ENCODE measurements at regions of chr14 and their contacts with region 1.

Region 1: GRCh38 chr14:68137704-68138619 is 318.4 kb downstream of the RAD51B start:
- DNase-seq: peak; percentile 79
- H3K4me3 Mint-ChIP-seq: no peak overlapping the region
- H3K27ac Mint-ChIP-seq: peak overlapping the region; percentile 89
- H3K4me1 Mint-ChIP-seq: peaks cover 38% of the 10 kb centered on the region
- H3K27me3 Mint-ChIP-seq: no peaks in the 10 kb centered on the region
- CTCF ChIP-seq: no peak

Region 2: DNA sequence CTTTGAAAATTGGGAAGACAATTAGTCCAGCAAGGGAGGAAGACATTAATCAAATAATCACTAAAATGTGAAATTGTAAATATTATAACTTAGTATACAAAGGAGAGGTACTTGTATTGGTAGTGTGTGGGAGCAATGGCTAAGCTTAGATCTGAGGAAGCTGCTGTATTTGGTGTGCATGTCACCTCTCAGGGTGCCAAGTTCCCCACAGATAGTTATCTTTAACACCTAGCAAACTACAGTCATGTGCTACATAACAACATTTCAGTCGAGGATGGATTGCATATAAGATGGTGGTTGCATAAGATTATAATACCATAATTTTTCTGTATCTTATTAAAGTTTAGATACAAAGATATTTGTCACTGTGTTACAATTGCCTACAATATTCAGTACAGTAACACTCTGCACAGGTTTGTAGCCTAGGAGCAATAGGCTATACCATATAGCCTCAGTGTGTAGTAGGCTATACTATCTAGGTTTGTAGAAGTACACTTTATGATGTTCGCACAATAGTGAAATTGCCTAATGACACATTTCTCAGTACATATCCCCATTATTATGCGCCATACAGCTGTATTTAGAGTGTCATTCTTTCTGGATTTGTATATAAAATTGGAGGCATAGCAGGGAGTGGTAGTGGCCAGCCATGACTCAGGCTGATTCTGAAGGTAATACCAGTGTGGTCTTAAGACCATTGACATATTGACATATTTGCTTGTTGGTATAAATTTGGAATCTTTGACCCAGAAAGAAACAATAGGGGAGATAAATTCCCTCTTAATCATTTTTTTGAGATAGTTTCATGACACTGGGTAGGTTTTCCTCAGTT is 262.6 kb before region 1 on chr14:
- CTCF ChIA-PET with region 1: no interaction called
- intact Hi-C with region 1: no loop called
- DNase-seq: no peak
- H3K4me3 Mint-ChIP-seq: no peak overlapping the region
- H3K27ac Mint-ChIP-seq: no peak overlapping the region
- H3K4me1 Mint-ChIP-seq: no peaks in the 10 kb centered on the region
- H3K27me3 Mint-ChIP-seq: no peaks in the 10 kb centered on the region
- CTCF ChIP-seq: no peak

Region 3: DNA sequence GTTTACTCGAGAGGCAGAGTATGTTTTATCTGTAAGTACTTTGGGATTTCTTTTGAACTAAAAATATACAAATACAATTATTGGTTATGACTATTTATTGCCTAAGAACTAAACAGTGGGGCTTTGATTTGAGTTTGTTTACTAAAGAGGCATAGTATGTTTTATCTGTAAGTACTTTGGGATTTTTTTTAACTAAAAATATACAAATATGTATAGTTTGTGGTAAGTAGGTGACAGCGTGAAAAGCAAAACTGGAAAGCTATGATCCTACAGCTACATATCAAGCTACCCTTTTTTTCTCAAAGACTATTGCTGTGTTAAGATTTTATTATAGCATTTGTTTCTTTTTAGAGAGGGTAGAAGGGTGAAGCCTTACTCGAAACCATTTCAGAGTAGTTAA is 147.4 kb before region 1 on chr14:
- CTCF ChIA-PET with region 1: no interaction called
- intact Hi-C with region 1: no loop called
- DNase-seq: no peak
- H3K4me3 Mint-ChIP-seq: no peak overlapping the region
- H3K27ac Mint-ChIP-seq: no peak overlapping the region
- H3K4me1 Mint-ChIP-seq: no peaks in the 10 kb centered on the region
- H3K27me3 Mint-ChIP-seq: no peaks in the 10 kb centered on the region
- CTCF ChIP-seq: no peak

Region 4: GRCh38 chr14:68084256-68084655 is 53.7 kb before region 1 on chr14:
- CTCF ChIA-PET with region 1: no interaction called
- intact Hi-C with region 1: loop called (anchors 5 kb)
- DNase-seq: peak; percentile 22
- H3K4me3 Mint-ChIP-seq: no peak overlapping the region
- H3K27ac Mint-ChIP-seq: no peak overlapping the region
- H3K4me1 Mint-ChIP-seq: peaks cover 34% of the 10 kb centered on the region
- H3K27me3 Mint-ChIP-seq: no peaks in the 10 kb centered on the region
- CTCF ChIP-seq: peak; percentile 15